Endothelial cell of umbilical vein (primary cell): ENCODE measurements at regions of chr6 and their contacts with region 1.

Region 1: DNA sequence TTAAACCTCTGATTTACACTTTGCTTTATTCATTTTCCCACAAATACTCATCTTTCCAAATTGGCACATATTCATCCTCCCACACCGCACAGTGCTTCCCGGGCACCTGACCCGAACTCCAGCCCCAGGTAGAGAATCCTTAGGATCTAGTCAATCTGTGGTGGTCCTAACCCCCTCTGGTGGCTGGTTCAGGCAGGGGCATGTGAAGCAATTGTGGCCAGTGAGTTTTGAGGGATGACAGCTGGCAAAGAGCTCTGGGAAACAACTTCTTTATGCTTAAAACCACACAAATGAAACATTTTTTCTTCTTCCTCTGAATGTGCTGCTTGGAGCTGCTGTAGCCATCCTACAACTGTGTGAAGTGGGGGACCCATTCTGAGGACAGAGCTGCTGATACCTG is 54.7 kb downstream of the ELOVL5 start:
- DNase-seq: peak; percentile 44
- H3K4me3 ChIP-seq: no peak overlapping the region
- H3K27ac ChIP-seq: no peak overlapping the region
- H3K4me1 ChIP-seq: peaks cover 14% of the 10 kb centered on the region
- H3K27me3 ChIP-seq: no peaks in the 10 kb centered on the region
- CTCF ChIP-seq: peak; percentile 67 to 77
- POLR2A ChIP-seq: no peak

Region 2: GRCh38 chr6:53281518-53282215 is 12.4 kb before region 1 on chr6:
- CTCF ChIA-PET with region 1: interaction called, 26 read pairs
- POLR2A ChIA-PET with region 1: no interaction called
- dilution Hi-C with region 1: no loop called
- intact Hi-C with region 1: no loop called
- DNase-seq: no peak
- H3K4me3 ChIP-seq: no peak overlapping the region
- H3K27ac ChIP-seq: no peak overlapping the region
- H3K4me1 ChIP-seq: no peaks in the 10 kb centered on the region
- H3K27me3 ChIP-seq: no peaks in the 10 kb centered on the region
- CTCF ChIP-seq: no peak
- POLR2A ChIP-seq: no peak

Region 3: DNA sequence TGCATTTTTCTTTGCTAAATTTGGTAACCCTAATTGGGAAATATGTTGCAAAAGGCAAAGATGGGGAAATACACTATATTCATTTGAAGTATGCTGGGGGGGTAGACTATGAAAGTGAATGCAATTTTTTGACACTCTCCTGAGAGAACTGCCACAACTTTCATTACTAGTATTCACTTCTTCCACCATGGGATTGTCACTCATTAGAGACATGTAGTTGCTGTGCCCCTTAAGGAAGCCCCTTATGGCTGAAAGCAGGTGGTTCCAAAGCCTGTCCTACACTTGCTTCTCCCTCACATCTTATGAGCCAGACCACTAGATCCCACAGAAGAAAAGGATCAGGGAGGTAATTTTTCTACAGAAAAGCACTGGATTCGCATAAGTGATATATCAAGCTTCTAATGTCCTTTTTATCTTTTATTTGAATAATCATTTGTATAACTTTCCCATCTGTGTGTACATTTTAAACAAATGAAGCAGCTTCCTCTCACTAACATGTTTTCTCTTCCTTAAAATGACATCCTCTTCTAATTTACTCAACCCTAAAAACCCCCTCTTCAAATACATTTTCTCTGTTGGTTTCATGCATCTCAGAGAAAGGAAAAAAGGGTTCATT is 167.1 kb after region 1 on chr6:
- CTCF ChIA-PET with region 1: no interaction called
- POLR2A ChIA-PET with region 1: no interaction called
- dilution Hi-C with region 1: no loop called
- intact Hi-C with region 1: no loop called
- DNase-seq: no peak
- H3K4me3 ChIP-seq: no peak overlapping the region
- H3K27ac ChIP-seq: no peak overlapping the region
- H3K4me1 ChIP-seq: no peaks in the 10 kb centered on the region
- H3K27me3 ChIP-seq: peaks cover 1 to 6% of the 10 kb centered on the region in 2 experiments
- CTCF ChIP-seq: no peak
- POLR2A ChIP-seq: no peak